ENCODE measurements at regions of chr12 and their contacts with region 1.

Region 1: DNA sequence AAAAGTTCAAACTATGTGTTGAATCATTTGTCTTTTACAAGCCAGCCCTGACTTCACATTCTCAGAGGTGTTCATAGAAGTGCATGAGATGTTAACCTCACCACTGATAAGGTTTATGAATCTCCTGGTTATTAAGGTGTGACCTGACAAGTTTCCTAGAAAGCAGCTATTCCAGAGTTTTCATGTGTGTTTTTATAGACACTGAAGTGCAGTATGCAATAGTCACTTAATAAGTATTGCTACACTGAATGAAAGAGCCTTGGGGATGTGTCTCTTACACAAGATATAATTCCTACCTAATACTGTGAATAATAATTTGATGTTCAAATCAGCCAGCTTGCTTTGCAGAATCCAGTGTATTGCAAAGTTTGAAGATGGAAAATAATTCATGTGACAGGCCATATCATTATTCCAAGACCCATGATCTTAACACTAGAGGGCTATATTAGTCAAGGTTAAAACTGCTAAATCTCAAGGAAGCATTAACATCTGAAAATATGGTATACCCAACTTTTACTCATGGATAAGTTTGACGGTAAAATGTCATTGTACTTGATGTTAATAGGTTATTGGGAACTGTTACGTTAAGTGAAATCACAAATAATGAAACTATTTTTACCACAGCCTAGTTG is 13.0 kb downstream of the SLC25A3 start:
- DNase-seq: no peak
- H3K4me3 ChIP-seq: no peak overlapping the region
- CTCF ChIP-seq: no peak

Region 2: GRCh38 chr12:98593351-98594049 is 13.0 kb before region 1 on chr12 and contains the start of gene SLC25A3:
- CTCF ChIA-PET with region 1: interaction called, 3 read pairs
- POLR2A ChIA-PET with region 1: interaction called, 22 read pairs
- DNase-seq: peak; percentile 85
- H3K4me3 ChIP-seq: peak within 1 kb of the TSS; percentile 95
- CTCF ChIP-seq: no peak

Region 3: DNA sequence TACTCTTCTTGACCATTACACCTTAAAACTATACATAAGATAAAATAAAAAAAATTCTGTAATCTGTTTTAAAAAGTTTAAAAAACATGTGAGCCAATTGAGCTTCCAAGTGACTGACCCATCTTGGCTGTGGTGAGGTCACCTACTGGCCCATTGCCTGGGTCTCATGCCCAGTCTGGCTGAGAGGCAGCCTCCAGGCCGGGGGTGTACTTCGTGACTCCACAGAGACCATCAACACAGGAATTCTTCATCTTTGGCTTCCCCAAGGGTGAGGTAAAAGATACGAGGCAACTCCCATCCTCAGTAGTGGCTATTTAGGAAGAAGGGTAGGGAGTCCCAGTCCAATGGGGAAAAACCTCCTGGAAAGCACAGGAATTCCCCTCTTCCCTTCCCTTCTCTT is 151.9 kb after region 1 on chr12:
- CTCF ChIA-PET with region 1: no interaction called
- POLR2A ChIA-PET with region 1: no interaction called
- DNase-seq: no peak
- H3K4me3 ChIP-seq: no peak overlapping the region
- CTCF ChIP-seq: no peak

Region 4: DNA sequence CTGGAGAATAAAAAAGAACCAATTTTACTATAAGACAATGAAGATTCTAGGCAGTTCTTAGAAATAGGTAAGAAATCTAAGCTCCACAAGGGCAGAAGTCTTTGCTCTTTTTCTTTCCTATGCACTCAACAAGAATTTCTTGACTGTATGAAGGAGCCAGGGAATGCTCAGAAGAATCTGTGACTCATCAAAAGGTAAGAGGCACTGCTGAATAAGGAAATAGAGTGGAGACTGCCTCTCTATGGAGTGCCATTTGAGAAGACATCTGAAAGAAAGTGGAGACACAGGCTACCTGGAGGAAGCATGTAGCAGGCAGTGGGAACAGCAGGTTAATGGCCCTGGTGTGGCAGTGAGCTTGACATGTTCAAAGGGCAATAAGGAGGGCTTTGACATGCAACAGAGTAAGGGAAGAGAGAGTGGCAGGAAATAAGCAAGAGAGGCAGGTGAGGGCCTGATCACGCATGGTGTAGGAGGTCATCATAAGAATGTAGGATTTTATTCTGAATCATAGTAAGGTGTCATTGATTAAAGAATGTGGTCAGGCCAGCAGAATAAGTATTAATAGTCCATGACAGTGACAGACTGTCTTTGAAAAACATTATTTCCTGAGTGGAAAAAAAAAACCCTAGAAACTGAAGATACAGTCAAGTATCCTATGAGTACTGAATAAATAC is 594.4 kb after region 1 on chr12:
- CTCF ChIA-PET with region 1: no interaction called
- POLR2A ChIA-PET with region 1: no interaction called
- DNase-seq: no peak
- H3K4me3 ChIP-seq: no peak overlapping the region
- CTCF ChIP-seq: no peak